ENCODE measurements at regions of chr16 and their contacts with region 1.

Region 1: GRCh38 chr16:68590201-68590994 is 51.3 kb downstream of the ZFP90 start:
- DNase-seq: peak; percentile 72
- H3K4me3 Mint-ChIP-seq: no peak overlapping the region
- H3K27ac Mint-ChIP-seq: no peak overlapping the region
- H3K4me1 Mint-ChIP-seq: peaks cover 2% of the 10 kb centered on the region
- H3K27me3 Mint-ChIP-seq: no peaks in the 10 kb centered on the region

Region 2: DNA sequence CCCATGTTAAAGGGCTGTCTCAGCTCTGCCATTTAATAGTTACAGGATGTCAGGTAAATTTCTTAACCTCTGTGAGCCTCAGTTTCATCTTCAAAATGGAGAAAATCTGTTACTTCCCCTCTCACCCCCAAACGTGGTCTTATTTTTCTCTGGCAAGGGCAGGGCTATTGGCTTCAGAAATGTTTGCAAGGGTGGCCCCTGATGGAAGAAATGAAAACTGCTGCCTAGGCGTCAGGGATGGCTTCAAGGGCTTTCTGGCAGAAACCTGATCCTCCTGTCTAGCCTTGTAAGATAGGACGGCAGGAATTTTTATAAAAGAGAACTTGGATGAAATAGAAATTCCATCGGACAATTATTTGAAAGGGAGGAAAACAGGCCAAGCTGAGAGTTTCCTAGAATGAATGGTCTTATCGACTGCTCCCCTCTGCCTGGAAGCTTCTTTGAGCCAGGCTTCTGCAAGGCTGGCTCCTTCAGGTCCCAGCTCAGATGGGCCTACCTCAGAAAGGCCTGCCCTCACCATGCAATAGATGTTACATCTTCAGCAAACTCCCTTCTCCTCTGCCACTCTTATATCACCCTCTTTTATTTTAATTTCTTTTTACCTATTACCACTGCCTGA is 210.0 kb after region 1 on chr16:
- CTCF ChIA-PET with region 1: interaction called, 23 read pairs
- DNase-seq: peak; percentile 66
- H3K4me3 Mint-ChIP-seq: no peak overlapping the region
- H3K27ac Mint-ChIP-seq: no peak overlapping the region
- H3K4me1 Mint-ChIP-seq: no peaks in the 10 kb centered on the region
- H3K27me3 Mint-ChIP-seq: no peaks in the 10 kb centered on the region

Region 3: DNA sequence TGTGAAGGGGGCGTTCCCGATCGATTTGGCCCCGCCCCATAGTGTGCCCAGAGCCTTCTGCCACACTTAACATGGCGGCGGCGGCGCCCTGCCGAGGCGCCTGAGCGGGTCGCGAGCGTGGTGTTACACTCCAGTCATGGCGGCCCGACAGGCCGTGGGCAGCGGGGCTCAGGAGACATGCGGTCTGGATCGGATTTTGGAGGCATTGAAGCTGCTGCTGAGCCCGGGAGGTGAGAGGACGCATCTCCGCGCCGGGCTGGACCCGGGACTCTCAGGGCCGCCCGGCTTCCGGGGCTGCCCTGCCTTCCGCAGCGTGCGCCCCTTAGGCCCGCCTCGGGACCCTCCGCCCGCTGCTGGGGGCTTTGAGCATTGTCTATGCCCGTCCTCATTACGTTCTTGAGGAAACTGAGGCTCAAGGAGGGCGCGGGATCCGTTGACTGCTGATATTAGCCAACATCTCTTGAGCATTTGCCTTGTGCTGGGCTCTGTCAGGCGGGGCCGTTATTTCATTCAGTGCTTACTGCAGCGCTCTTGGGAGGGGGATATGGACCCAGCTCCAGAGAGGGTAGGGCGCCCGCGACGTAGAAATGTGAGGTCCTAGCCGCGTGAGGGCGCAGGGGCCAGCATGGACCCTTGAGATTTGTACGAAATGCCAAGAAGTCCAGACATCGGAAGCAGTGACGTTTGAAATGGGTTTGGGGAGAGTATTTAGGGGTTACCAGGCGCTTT is 253.2 kb after region 1 on chr16 and contains the start of gene TANGO6:
- CTCF ChIA-PET with region 1: interaction called, 12 read pairs
- DNase-seq: peak; percentile 93
- H3K4me3 Mint-ChIP-seq: peak within 1 kb of the TSS; percentile 97
- H3K27ac Mint-ChIP-seq: peak within 1 kb of the TSS; percentile 89
- H3K4me1 Mint-ChIP-seq: peaks cover 38% of the 10 kb centered on the region
- H3K27me3 Mint-ChIP-seq: no peaks in the 10 kb centered on the region

Measured in activated naive CD4-positive, alpha-beta T cell treated with anti-CD3 and anti-CD28 coated beads, Interleukin-2, amount 10 ng/mL, durations not matched to agents 7 days and 5 days (primary cell).